Right ventricle myocardium inferior (tissue), 1 donor: ENCODE measurements at regions of chr7 and their contacts with region 1.

Region 1: GRCh38 chr7:134432296-134433152 is 26.4 kb downstream of the AKR1B1 start:
- DNase-seq: peak; percentile 92
- ATAC-seq: peak; percentile 97

Region 2: DNA sequence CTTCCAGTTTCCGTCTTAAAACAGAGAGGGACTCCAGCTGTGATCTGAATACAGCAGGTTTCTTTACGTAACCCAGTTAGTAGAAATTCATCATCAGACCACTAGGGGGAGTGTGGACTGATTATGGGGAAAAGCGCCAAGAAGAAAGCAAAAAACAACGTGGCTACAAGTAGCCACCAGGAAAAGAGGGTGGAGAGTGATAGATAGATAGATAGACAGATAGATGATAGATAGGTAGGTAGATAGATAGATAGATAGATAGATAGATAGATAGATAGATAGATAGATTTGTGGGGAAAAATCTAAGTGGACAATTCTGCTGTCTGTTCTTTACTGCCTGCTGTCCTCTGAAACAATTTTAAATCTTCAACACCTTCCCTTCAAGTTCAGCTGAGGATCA is 82.1 kb after region 1 on chr7:
- intact Hi-C with region 1: loop called (anchors 1 kb)
- DNase-seq: no peak
- ATAC-seq: peak; percentile 49

Region 3: GRCh38 chr7:134547397-134548054 is 115.0 kb after region 1 on chr7:
- intact Hi-C with region 1: loop called (anchors 2 kb)
- DNase-seq: no peak
- ATAC-seq: peak; percentile 95

Region 4: GRCh38 chr7:134619627-134620331 is 187.3 kb after region 1 on chr7:
- intact Hi-C with region 1: no loop called
- DNase-seq: no peak
- ATAC-seq: no peak

Region 5: DNA sequence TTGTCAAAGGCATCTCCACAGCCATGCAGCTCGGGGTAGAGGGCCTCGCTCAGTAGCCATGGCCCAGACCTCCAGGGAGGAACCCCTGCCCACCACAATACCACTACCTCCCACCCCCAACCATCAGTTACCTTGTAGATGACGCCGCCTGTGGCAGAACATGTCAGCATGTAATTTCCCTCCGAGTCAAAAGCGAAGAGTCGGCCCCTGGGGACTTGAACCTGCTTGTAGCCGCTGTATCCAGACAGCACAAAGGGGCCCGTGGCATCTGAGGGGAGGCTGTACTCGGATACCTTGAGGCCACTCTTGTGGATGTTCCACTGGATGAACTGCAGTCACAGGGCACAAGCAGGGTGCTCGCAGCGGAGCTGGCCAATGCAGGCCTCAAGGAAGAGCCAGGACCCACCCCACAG is 754.3 kb after region 1 on chr7:
- intact Hi-C with region 1: no loop called
- DNase-seq: peak; percentile 55
- ATAC-seq: no peak